ENCODE measurements at regions of chr19 and their contacts with region 1.

Region 1: DNA sequence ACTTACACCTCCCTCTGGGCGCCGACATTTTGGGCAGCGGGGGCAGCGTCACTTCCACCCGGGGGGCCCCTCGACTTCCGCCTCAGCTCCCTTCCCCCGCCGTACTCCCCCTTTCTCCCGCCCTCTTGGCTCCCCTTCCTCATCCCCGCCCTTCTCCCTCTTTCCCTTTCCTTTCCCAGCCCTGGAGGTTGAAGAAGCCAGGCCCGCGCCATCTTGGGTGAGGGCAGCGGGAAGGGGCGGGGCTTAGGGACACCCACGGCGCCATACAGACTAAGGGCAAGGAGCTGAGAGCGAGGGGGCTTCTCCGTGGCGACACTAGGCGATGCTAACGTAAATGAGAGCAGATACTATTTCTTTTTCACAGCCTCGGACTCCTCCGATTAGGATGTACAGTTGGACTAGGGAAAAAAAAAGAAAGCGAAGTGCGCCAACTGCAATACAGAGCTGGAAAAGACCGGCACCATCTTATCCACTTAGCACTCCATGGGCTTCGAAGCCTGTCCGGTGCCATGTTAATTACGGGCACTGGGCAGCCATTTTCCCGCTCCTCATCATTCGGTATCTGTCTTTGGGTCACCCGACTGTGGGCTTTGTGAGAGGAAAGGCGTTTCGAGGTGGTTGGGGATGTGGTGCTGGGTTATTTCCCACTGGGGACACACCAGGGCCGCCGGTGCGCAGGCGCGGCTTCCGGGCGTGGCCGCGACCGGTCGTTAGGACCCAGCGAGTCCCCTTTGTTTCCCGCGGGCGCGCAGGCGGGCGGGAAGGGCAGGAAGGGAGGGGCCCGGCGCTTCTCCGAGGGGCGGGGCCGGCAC is at the start of gene FIZ1:
- DNase-seq: peak; percentile 95
- ATAC-seq: peak; percentile 77
- H3K4me3 Mint-ChIP-seq: peak within 1 kb of the TSS; percentile 99
- H3K27ac Mint-ChIP-seq: peak within 1 kb of the TSS; percentile 99
- H3K4me1 Mint-ChIP-seq: peaks cover 25% of the 10 kb centered on the region
- H3K27me3 Mint-ChIP-seq: no peaks in the 10 kb centered on the region
- total RNA-seq, gene FIZ1: 16.0 to 18.4 TPM

Region 2: GRCh38 chr19:55476100-55476775 is 123.4 kb before region 1 on chr19 and contains the start of gene ZNF628:
- POLR2A ChIA-PET with region 1: interaction called, 12 read pairs
- DNase-seq: peak; percentile 97
- ATAC-seq: peak; percentile 89
- H3K4me3 Mint-ChIP-seq: peak within 1 kb of the TSS; percentile 89
- H3K27ac Mint-ChIP-seq: peak within 1 kb of the TSS; percentile 94
- H3K4me1 Mint-ChIP-seq: peaks cover 18% of the 10 kb centered on the region
- H3K27me3 Mint-ChIP-seq: no peaks in the 10 kb centered on the region
- total RNA-seq, gene ZNF628: 9.4 to 11.5 TPM

Region 3: DNA sequence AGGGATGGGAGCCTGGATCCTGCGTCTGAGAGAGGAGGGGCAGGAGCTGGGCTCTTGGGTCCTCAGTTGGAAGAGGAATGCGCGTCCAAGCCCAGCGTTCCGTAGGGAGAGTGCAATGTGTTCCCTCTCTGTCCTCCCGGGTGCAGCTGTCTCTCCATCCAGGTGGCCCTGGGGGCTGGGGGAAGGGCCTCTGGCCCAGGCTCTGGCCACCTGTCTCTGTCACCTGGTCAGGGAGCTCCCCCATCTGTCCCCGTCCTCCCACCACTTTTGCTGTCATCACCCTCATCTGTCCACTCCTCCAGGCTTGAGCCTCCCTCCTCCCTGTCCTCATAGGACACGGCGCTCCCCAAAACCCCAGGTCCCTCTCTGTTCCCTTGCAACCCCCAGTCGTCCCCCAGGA is 59.1 kb before region 1 on chr19:
- POLR2A ChIA-PET with region 1: no interaction called
- DNase-seq: no peak
- ATAC-seq: no peak
- H3K4me3 Mint-ChIP-seq: no peak overlapping the region
- H3K27ac Mint-ChIP-seq: no peak overlapping the region
- H3K4me1 Mint-ChIP-seq: no peaks in the 10 kb centered on the region
- H3K27me3 Mint-ChIP-seq: no peaks in the 10 kb centered on the region

Region 4: DNA sequence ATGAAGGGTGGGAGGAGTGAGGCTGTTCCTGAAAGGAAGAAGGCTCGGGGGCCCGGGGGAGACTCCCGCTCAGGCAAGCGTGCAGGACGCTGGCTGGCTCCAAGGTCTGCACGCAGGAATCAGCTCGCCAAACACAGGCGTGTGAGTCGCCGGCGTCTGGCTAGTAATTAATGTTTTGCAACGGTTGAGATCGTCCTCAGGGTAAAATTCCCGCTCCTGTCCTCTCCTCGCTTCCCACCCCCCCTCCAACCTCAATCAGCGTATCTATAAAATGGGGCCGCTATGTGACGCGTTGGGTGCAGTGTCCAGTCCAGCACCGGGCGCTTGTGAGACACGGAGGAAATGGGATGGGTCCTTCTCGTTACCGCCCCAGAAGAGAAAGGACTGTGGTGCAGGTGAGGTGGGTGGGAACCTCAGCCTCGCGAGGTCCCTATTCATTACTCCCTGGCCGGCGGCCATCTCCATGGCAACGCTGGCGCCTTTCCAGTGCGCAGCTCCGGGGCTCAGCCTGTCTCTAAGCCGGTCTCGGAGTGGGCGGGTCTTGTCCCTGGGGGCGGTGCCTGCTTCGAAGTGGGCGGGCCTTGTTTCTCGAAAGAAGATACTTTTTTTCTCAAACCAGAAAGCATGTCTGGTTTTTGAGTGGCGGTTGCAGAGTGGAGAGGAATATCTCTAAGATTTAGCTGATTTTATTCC is 12.6 kb before region 1 on chr19:
- POLR2A ChIA-PET with region 1: interaction called, 18 read pairs
- DNase-seq: peak; percentile 90
- ATAC-seq: peak; percentile 98
- H3K4me3 Mint-ChIP-seq: peak overlapping the region; percentile 76
- H3K27ac Mint-ChIP-seq: no peak overlapping the region
- H3K4me1 Mint-ChIP-seq: peaks cover 9% of the 10 kb centered on the region
- H3K27me3 Mint-ChIP-seq: peaks cover 24% of the 10 kb centered on the region

Region 5: DNA sequence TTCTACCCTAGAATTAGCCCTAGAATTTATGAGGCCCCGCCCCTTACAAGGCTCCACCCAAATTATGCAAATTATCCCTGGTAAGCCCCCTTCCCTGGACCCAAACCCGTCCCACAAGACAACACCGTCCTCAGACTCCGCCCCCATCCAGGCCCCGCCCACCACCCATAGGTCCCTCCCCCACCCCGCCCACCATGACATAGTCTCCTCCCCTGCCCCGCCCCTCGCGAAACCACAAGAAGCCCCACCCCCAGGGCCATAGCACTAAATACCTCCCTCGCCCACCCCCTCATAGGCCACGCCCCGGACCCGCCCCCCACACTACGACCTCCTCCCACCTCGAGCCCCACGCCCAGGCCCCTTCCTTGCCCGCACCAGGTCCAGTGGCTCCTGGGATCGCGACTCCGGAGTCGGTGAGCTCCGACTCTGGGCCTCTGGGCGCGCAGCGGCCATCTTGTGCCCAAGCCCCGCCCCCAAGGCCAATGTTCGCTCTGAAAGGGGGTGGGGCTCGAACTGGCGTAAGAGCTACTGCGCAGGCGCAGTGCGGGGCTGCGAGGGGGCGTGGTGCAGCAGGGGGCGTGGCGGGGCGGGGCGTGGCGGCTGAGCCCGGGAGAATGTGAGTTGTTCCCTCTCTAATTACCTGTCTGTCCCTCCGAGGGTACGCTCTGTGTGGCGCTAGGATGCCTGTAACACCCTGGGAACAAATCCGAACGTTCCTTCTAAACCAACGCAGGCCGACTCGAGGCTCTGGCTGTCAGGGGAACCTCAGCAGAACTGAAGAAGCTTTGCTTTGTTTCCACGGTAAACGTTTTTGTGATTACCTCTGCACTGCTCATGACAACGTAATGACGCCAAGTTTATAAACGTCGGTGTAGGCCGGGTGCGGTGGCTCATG is 24.7 kb after region 1 on chr19 and contains the start of gene ZNF784:
- POLR2A ChIA-PET with region 1: interaction called, 49 read pairs
- DNase-seq: peak; percentile 97
- ATAC-seq: peak; percentile 55
- H3K4me3 Mint-ChIP-seq: peak within 1 kb of the TSS; percentile 99
- H3K27ac Mint-ChIP-seq: peak within 1 kb of the TSS; percentile 99
- H3K4me1 Mint-ChIP-seq: peaks cover 53% of the 10 kb centered on the region
- H3K27me3 Mint-ChIP-seq: peaks cover 17% of the 10 kb centered on the region
- total RNA-seq, gene ZNF784: 6.3 to 7.6 TPM

Region 6: DNA sequence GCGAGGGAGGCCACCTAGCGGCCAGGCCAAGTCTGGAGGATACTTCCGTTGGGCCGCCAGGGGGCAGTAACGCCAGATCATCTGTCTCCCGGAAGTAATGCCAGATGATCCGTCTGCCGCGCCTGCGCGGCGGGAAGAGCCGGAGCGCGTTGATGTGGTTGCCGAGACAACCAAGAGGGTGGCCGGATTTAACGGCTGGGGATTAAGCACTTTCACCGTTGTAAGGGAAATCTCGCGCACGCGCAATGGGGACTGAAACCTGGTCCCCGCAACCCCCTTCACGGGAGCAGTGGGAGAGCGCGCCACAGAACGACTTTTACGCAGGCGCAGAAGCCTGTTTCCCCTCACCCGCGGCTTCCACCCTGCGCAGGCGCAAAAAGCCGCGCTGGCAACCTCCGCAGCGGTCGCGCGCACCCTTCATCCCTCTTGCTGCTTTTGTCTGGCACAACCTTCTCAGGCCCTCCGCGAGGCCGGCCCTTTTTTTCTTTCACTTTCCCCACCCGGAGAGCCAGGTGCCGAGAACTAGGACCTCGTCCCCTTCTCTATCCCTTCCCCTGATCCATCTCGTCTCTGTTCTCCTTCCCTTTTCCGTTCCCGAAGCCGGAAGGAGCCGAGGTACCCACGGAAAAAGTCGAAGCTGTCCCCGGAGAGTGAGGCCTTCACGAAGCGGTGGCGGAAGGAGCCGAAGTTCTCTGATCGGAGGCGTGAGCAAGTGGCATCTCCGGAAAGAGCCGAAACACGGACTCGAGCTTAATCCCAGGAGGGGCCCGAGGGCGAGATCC is 54.3 kb after region 1 on chr19:
- POLR2A ChIA-PET with region 1: interaction called, 18 read pairs
- DNase-seq: peak; percentile 97
- ATAC-seq: peak; percentile 81
- H3K4me3 Mint-ChIP-seq: peak overlapping the region; percentile 85
- H3K27ac Mint-ChIP-seq: peak overlapping the region; percentile 94
- H3K4me1 Mint-ChIP-seq: peaks cover 29% of the 10 kb centered on the region
- H3K27me3 Mint-ChIP-seq: no peaks in the 10 kb centered on the region